ENCODE measurements at regions of chr6 and their contacts with region 1.

Region 1: DNA sequence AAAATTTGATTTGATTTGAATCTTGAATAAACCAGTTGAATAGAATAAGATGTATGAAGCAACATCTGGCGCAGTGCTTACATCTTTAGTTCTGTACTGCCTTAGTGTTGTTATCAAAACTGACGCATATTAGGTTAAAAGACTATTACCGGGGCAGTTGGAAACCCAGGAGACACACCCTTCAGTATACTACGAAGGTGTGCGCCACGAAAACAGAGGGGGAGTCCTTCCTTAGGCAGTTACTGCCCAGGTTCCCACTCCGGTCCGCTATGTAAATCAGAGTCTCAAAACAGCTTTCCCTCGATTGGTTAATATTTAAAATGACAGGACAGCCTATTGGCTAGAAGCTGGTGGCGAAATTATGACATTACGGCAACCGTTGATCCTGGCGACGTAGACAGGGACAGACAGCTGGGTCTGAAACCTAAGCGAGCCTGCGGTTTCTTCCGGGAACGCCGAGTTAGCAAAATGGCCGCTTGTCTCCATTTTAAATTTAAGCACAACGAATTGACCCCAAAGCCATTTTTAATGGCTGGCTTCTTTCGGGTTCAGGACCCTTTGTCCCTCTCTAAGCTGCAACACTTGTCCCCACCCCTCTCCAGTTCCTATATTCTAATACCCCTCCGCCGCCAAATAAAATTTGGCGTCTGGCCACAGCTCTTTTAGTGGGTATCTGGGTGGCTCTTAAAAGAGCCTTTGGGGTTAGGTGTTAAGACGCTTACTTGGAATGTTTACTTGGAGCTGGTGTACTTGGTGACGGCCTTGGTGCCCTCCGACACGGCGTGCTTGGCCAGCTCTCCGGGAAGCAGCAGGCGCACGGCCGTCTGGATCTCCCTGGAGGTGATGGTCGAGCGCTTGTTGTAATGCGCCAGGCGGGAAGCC is 35.8 kb downstream of the HFE start:
- DNase-seq: peak; percentile 73 to 99 (median 91)
- ATAC-seq: peak; percentile 54
- H3K4me3 ChIP-seq: peak overlapping the region; percentile 78 to 98
- H3K4me3 Mint-ChIP-seq: peak overlapping the region; percentile 94
- H3K27ac ChIP-seq: peak overlapping the region; percentile 87 to 94
- H3K27ac Mint-ChIP-seq: peak overlapping the region; percentile 99
- H3K4me1 ChIP-seq: peaks cover 20% of the 10 kb centered on the region
- H3K4me1 Mint-ChIP-seq: peaks cover 27% of the 10 kb centered on the region
- H3K27me3 ChIP-seq: no peaks in the 10 kb centered on the region
- H3K27me3 Mint-ChIP-seq: no peaks in the 10 kb centered on the region
- CTCF ChIP-seq: no peak

Region 2: GRCh38 chr6:25882051-25882496 is 241.0 kb before region 1 on chr6:
- CTCF ChIA-PET with region 1: no interaction called
- POLR2A ChIA-PET with region 1: no interaction called
- intact Hi-C with region 1: no loop called
- DNase-seq: peak in 6 of 9 experiments; percentile 5 to 71 (median 55)
- ATAC-seq: peak; percentile 85
- H3K4me3 ChIP-seq: peak overlapping the region in 1 of 2 experiments; percentile 42
- H3K4me3 Mint-ChIP-seq: peak overlapping the region; percentile 89
- H3K27ac ChIP-seq: no peak overlapping the region
- H3K27ac Mint-ChIP-seq: peak overlapping the region; percentile 87
- H3K4me1 ChIP-seq: no peaks in the 10 kb centered on the region
- H3K4me1 Mint-ChIP-seq: peaks cover 2% of the 10 kb centered on the region
- H3K27me3 ChIP-seq: no peaks in the 10 kb centered on the region
- H3K27me3 Mint-ChIP-seq: peaks cover 3% of the 10 kb centered on the region
- CTCF ChIP-seq: peak; percentile 33

Region 3: DNA sequence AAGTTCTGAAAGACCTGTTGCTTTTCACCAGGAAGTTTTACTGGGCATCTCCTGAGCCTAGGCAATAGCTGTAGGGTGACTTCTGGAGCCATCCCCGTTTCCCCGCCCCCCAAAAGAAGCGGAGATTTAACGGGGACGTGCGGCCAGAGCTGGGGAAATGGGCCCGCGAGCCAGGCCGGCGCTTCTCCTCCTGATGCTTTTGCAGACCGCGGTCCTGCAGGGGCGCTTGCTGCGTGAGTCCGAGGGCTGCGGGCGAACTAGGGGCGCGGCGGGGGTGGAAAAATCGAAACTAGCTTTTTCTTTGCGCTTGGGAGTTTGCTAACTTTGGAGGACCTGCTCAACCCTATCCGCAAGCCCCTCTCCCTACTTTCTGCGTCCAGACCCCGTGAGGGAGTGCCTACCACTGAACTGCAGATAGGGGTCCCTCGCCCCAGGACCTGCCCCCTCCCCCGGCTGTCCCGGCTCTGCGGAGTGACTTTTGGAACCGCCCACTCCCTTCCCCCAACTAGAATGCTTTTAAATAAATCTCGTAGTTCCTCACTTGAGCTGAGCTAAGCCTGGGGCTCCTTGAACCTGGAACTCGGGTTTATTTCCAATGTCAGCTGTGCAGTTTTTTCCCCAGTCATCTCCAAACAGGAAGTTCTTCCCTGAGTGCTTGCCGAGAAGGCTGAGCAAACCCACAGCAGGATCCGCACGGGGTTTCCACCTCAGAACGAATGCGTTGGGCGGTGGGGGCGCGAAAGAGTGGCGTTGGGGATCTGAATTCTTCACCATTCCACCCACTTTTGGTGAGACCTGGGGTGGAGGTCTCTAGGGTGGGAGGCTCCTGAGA is 35.5 kb before region 1 on chr6 and contains the start of gene HFE:
- CTCF ChIA-PET with region 1: no interaction called
- POLR2A ChIA-PET with region 1: interaction called, 23 read pairs
- intact Hi-C with region 1: no loop called
- DNase-seq: peak in 7 of 9 experiments; percentile 10 to 59 (median 40)
- ATAC-seq: peak; percentile 35
- H3K4me3 ChIP-seq: peak within 1 kb of the TSS; percentile 75 to 84
- H3K4me3 Mint-ChIP-seq: peak within 1 kb of the TSS; percentile 88
- H3K27ac ChIP-seq: peak within 1 kb of the TSS; percentile 56 to 60
- H3K27ac Mint-ChIP-seq: peak within 1 kb of the TSS; percentile 81
- H3K4me1 ChIP-seq: peaks cover 27% of the 10 kb centered on the region
- H3K4me1 Mint-ChIP-seq: peaks cover 36% of the 10 kb centered on the region
- H3K27me3 ChIP-seq: peaks cover 0 to 2% of the 10 kb centered on the region in 2 experiments
- H3K27me3 Mint-ChIP-seq: no peaks in the 10 kb centered on the region
- CTCF ChIP-seq: no peak
- total RNA-seq, gene HFE: 0.30 to 0.44 TPM

Region 4: GRCh38 chr6:26175428-26176181 is 52.6 kb after region 1 on chr6:
- CTCF ChIA-PET with region 1: interaction called, 3 read pairs
- POLR2A ChIA-PET with region 1: interaction called, 125 read pairs
- intact Hi-C with region 1: loop called in 1 of 2 experiments (anchors 1 kb)
- DNase-seq: peak in 7 of 9 experiments; percentile 33 to 87 (median 53)
- ATAC-seq: no peak
- H3K4me3 ChIP-seq: no peak overlapping the region
- H3K4me3 Mint-ChIP-seq: peak overlapping the region; percentile 3
- H3K27ac ChIP-seq: no peak overlapping the region
- H3K27ac Mint-ChIP-seq: peak overlapping the region; percentile 63
- H3K4me1 ChIP-seq: peaks cover 26% of the 10 kb centered on the region
- H3K4me1 Mint-ChIP-seq: peaks cover 39% of the 10 kb centered on the region
- H3K27me3 ChIP-seq: no peaks in the 10 kb centered on the region
- H3K27me3 Mint-ChIP-seq: no peaks in the 10 kb centered on the region
- CTCF ChIP-seq: peak; percentile 93

Region 5: DNA sequence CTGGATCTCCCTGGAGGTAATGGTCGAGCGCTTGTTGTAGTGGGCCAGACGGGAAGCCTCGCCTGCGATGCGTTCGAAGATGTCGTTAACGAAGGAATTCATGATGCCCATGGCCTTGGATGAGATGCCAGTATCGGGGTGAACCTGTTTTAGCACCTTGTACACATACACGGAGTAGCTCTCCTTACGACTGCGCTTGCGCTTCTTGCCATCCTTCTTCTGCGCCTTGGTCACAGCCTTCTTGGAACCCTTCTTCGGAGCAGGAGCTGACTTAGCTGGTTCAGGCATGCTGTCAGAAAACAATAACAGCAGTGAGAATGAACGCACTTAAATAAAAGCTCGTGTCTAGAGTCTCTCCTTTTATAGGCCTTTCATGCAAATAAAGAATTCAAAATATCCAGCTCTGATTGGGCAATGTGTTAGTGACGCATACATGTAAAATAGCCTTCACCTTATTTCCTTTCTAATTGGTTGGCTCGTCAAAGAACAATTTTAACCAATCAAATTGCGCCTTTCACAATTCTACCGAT is 93.4 kb after region 1 on chr6:
- CTCF ChIA-PET with region 1: interaction called, 10 read pairs
- POLR2A ChIA-PET with region 1: interaction called, 173 read pairs
- intact Hi-C with region 1: loop called (anchors 1 kb)
- DNase-seq: peak; percentile 61 to 96 (median 73)
- ATAC-seq: peak; percentile 79
- H3K4me3 ChIP-seq: peak overlapping the region; percentile 71 to 74
- H3K4me3 Mint-ChIP-seq: no peak overlapping the region
- H3K27ac ChIP-seq: peak overlapping the region; percentile 82 to 91
- H3K27ac Mint-ChIP-seq: no peak overlapping the region
- H3K4me1 ChIP-seq: peaks cover 19% of the 10 kb centered on the region
- H3K4me1 Mint-ChIP-seq: peaks cover 14% of the 10 kb centered on the region
- H3K27me3 ChIP-seq: no peaks in the 10 kb centered on the region
- H3K27me3 Mint-ChIP-seq: no peaks in the 10 kb centered on the region
- CTCF ChIP-seq: no peak

Region 6: DNA sequence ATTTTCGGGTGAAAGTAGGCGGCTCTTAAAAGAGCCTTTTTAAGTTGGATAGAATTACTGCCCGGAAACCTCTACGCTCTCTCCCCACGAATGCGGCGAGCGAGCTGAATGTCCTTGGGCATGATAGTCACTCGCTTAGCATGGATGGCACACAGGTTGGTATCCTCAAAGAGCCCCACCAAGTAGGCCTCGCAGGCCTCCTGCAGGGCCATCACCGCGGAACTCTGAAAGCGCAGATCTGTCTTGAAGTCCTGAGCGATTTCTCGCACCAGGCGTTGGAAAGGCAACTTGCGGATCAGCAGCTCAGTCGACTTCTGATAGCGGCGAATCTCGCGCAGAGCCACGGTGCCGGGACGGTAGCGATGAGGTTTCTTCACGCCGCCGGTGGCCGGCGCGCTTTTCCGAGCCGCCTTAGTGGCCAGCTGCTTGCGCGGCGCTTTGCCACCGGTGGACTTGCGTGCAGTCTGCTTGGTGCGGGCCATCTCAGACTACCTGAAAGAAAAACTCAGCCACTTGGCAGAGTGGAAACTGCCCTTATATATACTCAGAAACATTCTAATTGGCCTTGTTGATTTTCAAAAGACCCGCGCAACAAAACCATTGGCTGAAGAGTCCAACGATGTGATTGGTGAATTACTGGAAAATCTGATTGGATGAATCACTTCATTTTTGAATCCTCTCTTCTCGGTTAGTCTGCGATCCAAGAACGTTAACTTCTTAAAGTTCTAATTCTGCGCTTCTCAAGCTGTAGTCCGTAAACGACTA is 148.1 kb after region 1 on chr6:
- CTCF ChIA-PET with region 1: no interaction called
- POLR2A ChIA-PET with region 1: interaction called, 75 read pairs
- intact Hi-C with region 1: loop called (anchors 1 to 2 kb)
- DNase-seq: peak; percentile 68 to 91 (median 80)
- ATAC-seq: peak; percentile 22
- H3K4me3 ChIP-seq: peak overlapping the region; percentile 65 to 67
- H3K4me3 Mint-ChIP-seq: no peak overlapping the region
- H3K27ac ChIP-seq: peak overlapping the region; percentile 73 to 92
- H3K27ac Mint-ChIP-seq: peak overlapping the region; percentile 73
- H3K4me1 ChIP-seq: peaks cover 22% of the 10 kb centered on the region
- H3K4me1 Mint-ChIP-seq: peaks cover 13% of the 10 kb centered on the region
- H3K27me3 ChIP-seq: no peaks in the 10 kb centered on the region
- H3K27me3 Mint-ChIP-seq: no peaks in the 10 kb centered on the region
- CTCF ChIP-seq: no peak

Region 7: GRCh38 chr6:27809939-27810767 is 1687.1 kb after region 1 on chr6:
- CTCF ChIA-PET with region 1: no interaction called
- POLR2A ChIA-PET with region 1: interaction called, 47 read pairs
- intact Hi-C with region 1: loop called in 1 of 2 experiments (anchors 2 kb)
- DNase-seq: peak; percentile 63 to 96 (median 74)
- ATAC-seq: peak; percentile 60
- H3K4me3 ChIP-seq: peak overlapping the region; percentile 52 to 65
- H3K4me3 Mint-ChIP-seq: peak overlapping the region; percentile 95
- H3K27ac ChIP-seq: peak overlapping the region; percentile 83 to 87
- H3K27ac Mint-ChIP-seq: peak overlapping the region; percentile 99
- H3K4me1 ChIP-seq: peaks cover 36% of the 10 kb centered on the region
- H3K4me1 Mint-ChIP-seq: peaks cover 57% of the 10 kb centered on the region
- H3K27me3 ChIP-seq: no peaks in the 10 kb centered on the region
- H3K27me3 Mint-ChIP-seq: no peaks in the 10 kb centered on the region
- CTCF ChIP-seq: no peak

Region 8: GRCh38 chr6:27871924-27872638 is 1749.0 kb after region 1 on chr6:
- CTCF ChIA-PET with region 1: no interaction called
- POLR2A ChIA-PET with region 1: interaction called, 43 read pairs
- intact Hi-C with region 1: no loop called
- DNase-seq: peak; percentile 72 to 97 (median 85)
- ATAC-seq: peak; percentile 75
- H3K4me3 ChIP-seq: peak overlapping the region; percentile 54 to 67
- H3K4me3 Mint-ChIP-seq: peak overlapping the region; percentile 82
- H3K27ac ChIP-seq: peak overlapping the region; percentile 81 to 86
- H3K27ac Mint-ChIP-seq: peak overlapping the region; percentile 98
- H3K4me1 ChIP-seq: peaks cover 20% of the 10 kb centered on the region
- H3K4me1 Mint-ChIP-seq: peaks cover 36% of the 10 kb centered on the region
- H3K27me3 ChIP-seq: peaks cover 0 to 3% of the 10 kb centered on the region in 2 experiments
- H3K27me3 Mint-ChIP-seq: no peaks in the 10 kb centered on the region
- CTCF ChIP-seq: peak; percentile 48

Measured in CD8-positive, alpha-beta T cell (primary cell).